Activated CD8-positive, alpha-beta T cell treated with anti-CD3 and anti-CD28 coated beads, Interleukin-2, amount 10 ng/mL, durations not matched to agents 7 days and 5 days (primary cell): ENCODE measurements at regions of chr19 and their contacts with region 1.

Region 1: DNA sequence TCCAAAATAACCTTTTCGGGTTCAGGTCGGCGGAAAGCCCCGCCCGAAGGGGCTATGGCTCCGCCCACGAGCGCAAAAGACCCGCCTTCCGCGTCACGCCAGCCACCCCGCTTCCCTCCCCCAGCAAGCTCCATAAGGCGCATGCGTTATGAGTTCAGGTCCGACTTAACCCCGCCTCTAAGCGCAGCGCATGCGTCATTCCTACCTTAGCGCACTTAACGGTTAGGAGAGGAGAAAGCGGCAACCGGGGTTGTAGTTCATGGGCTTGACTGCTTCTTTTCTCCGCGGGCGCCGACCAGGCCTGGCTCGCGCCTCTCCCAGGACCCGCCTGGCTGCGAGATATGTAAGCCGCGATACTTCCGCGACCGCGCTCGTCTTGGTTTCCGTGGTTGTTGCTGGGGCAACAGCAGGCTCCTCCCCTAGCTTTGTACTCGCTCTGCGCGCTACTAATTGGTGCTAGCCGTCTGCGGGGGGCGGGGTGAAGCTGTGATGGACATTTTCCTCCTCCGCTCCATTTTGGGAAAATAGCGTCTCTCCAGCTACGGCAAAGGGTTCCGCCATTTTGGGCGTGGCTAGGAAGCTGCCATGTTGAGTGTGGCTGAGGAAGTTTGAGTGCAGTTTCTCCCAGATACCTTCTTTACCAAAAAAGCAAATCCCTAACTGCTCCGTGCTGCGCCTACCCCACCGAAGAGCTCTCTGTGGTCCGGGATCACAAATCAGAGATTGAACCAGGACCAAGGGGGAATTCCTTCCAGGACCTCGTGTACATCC is at the start of gene B9D2:
- DNase-seq: peak; percentile 99
- ATAC-seq: peak; percentile 96
- H3K4me3 Mint-ChIP-seq: peak within 1 kb of the TSS; percentile 93
- H3K27ac Mint-ChIP-seq: peak within 1 kb of the TSS; percentile 99
- H3K4me1 Mint-ChIP-seq: peaks cover 37% of the 10 kb centered on the region
- H3K27me3 Mint-ChIP-seq: no peaks in the 10 kb centered on the region
- total RNA-seq, gene B9D2: 10.6 to 12.8 TPM

Region 2: GRCh38 chr19:41376241-41376997 is 12.5 kb after region 1 on chr19 and contains the start of gene TMEM91:
- CTCF ChIA-PET with region 1: interaction called, 15 read pairs
- POLR2A ChIA-PET with region 1: no interaction called
- DNase-seq: no peak
- ATAC-seq: peak; percentile 27
- H3K4me3 Mint-ChIP-seq: peak within 1 kb of the TSS; percentile 34
- H3K27ac Mint-ChIP-seq: peak within 1 kb of the TSS; percentile 44
- H3K4me1 Mint-ChIP-seq: peaks cover 20% of the 10 kb centered on the region
- H3K27me3 Mint-ChIP-seq: no peaks in the 10 kb centered on the region
- total RNA-seq, gene TMEM91: 5.3 to 6.4 TPM

Region 3: DNA sequence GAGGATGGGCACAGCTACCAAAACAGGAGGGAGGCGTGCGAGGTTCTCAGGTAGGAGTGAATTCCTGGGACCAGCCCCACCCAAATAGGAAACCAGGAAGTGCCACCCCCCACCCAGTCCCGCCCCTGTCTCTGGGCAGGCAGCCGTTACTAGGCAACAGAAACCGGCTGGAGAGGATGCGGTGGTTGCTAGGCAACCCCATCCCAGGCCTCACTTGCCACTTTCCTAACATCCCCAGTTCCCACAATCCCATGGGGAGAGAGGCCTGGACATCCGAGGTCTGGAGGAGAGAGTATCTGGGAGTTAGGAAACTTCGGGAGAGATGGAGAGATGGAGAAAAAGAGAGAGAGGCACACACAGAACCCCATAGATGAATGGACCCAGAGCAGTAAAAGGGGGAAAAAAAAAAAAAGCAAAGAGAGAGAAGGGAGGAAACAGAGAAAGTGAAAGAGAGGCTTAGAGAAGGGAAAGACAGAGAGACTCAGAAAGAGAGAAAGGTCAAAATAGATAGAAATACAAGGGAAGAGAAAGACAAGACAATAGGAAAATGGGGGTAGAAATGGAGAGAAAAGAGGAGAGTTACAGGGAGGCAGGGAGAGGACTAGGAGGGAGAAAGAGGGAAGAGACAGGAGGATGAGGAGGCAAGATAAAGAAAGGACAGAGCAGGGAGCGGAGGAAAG is 702.3 kb after region 1 on chr19:
- CTCF ChIA-PET with region 1: no interaction called
- POLR2A ChIA-PET with region 1: no interaction called
- DNase-seq: peak; percentile 33
- ATAC-seq: no peak
- H3K4me3 Mint-ChIP-seq: no peak overlapping the region
- H3K27ac Mint-ChIP-seq: no peak overlapping the region
- H3K4me1 Mint-ChIP-seq: no peaks in the 10 kb centered on the region
- H3K27me3 Mint-ChIP-seq: peaks cover 9% of the 10 kb centered on the region